BJ (cell line): ENCODE measurements at regions of chr2 and their contacts with region 1.

Region 1: GRCh38 chr2:64859312-64860212 is 129.6 kb upstream of the SLC1A4 start:
- DNase-seq: peak; percentile 70
- H3K4me3 ChIP-seq: peak overlapping the region; percentile 33
- H3K27me3 ChIP-seq: no peaks in the 10 kb centered on the region
- CTCF ChIP-seq: no peak

Region 2: GRCh38 chr2:64819774-64820696 is 39.5 kb before region 1 on chr2:
- CTCF ChIA-PET with region 1: no interaction called
- POLR2A ChIA-PET with region 1: no interaction called
- DNase-seq: no peak
- H3K4me3 ChIP-seq: no peak overlapping the region
- H3K27me3 ChIP-seq: no peaks in the 10 kb centered on the region
- CTCF ChIP-seq: no peak

Region 3: DNA sequence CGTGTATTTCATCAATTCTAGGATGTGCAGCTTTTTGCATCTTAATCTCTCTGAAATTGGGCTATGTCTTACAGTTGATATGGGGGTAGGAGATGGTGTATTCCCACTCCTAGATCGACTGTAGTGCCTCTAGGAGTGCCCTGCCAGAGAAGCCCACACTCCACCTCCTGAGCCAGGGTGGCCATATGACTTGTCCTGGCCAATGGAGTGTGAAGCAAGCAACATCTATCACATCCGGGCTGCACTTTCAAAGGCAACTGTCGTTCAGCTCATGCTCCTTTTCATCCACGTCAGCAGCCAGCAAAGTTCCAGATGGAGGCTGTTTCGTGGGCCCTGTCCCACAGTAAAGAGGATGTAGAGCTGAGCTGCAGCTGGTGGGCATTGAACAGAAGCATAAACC is 19.7 kb before region 1 on chr2:
- CTCF ChIA-PET with region 1: interaction called, 20 read pairs
- POLR2A ChIA-PET with region 1: no interaction called
- DNase-seq: no peak
- H3K4me3 ChIP-seq: no peak overlapping the region
- H3K27me3 ChIP-seq: no peaks in the 10 kb centered on the region
- CTCF ChIP-seq: no peak

Region 4: GRCh38 chr2:64874466-64874992 is 15.0 kb after region 1 on chr2:
- CTCF ChIA-PET with region 1: no interaction called
- POLR2A ChIA-PET with region 1: no interaction called
- DNase-seq: no peak
- H3K4me3 ChIP-seq: no peak overlapping the region
- H3K27me3 ChIP-seq: peaks cover 18% of the 10 kb centered on the region
- CTCF ChIP-seq: no peak